Naive thymus-derived CD4-positive, alpha-beta T cell (primary cell): ENCODE measurements at regions of chr17 and their contacts with region 1.

Region 1: DNA sequence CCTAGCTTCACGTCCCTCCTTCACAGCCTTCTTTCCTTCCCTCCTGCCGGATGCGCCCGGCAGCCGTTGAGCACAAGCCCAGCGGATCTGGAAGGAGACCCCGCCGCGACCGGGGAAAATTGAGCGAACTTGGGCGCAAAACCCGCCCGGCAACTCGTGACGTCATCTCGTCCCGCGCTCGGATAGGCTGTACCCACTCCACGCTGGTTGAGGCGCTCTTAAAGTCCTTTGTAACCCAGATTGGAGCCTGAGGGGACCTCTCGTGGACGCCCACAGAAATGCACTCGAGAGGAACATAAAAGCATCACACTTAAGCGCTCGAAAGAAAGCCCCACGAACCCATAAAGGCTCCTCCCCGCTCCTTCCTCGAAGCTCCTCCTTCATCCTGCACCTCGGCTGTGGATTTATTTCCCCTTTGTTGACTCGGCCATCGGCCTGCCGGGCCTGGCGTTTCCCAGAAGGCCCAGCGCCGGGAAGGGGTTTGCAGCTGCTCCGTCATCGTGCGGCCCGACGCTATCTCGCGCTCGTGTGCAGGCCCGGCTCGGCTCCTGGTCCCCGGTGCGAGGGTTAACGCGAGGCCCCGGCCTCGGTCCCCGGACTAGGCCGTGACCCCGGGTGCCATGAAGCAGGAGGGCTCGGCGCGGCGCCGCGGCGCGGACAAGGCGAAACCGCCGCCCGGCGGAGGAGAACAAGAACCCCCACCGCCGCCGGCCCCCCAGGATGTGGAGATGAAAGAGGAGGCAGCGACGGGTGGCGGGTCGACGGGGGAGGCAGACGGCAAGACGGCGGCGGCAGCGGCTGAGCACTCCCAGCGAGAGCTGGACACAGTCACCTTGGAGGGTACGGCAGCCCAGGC is at the start of gene PSMD3:
- DNase-seq: peak; percentile 86 to 99 (median 98)
- ATAC-seq: peak; percentile 97
- H3K4me3 ChIP-seq: peak within 1 kb of the TSS; percentile 63
- H3K4me3 Mint-ChIP-seq: peak within 1 kb of the TSS; percentile 89 to 97 (median 94)
- H3K27ac ChIP-seq: peak within 1 kb of the TSS; percentile 91
- H3K27ac Mint-ChIP-seq: peak within 1 kb of the TSS; percentile 89 to 96 (median 93)
- H3K4me1 ChIP-seq: peaks cover 17 to 23% of the 10 kb centered on the region in 2 donors
- H3K4me1 Mint-ChIP-seq: peaks cover 24 to 50% (median 46%) of the 10 kb centered on the region in 7 donors
- H3K27me3 ChIP-seq: no peaks in the 10 kb centered on the region
- H3K27me3 Mint-ChIP-seq: peaks cover 0 to 13% (median 0%) of the 10 kb centered on the region in 5 donors
- total RNA-seq, gene PSMD3: 55.7 to 111 (median 68.9) TPM

Region 2: DNA sequence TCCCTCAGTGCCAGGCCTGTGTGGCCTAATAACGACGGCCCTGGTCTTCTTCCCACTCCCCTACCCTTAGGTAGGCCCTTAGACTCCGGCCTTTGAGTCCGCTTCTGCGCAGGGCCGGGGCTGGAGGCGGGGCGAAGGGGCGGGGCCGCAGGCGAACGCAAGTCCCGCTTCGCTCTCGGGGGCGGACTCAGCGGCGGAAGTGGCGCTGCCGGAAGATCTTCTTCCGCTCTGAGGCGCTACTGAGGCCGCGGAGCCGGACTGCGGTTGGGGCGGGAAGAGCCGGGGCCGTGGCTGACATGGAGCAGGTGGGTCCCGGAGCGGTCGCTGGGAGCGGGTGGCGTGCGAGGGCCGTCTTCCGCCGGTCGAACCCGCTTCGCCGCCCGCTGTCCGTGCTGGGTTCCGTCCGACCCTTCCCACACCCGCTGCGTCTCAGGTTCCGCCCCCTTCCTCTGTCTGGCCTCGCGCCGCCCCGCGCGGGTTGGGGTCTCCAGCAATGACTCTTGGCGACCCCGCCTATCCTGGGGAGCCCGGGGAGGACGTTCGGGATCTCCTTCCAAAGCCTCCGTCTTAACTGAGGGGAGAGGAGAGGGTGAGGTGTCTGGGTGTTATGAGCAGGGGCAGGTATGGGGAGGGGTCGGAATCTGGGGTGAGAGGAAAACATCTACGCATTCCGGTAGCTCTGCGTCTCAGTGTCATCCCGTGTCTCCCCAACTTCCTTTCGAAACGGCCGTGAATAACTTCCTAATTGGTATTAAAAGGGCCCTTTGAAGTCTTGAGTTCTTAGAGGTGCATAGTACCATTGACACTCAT is 343.4 kb before region 1 on chr17 and contains the start of gene STARD3:
- CTCF ChIA-PET with region 1: no interaction called
- POLR2A ChIA-PET with region 1: no interaction called
- intact Hi-C with region 1: loop called (anchors 1 to 5 kb)
- DNase-seq: peak; percentile 80 to 92 (median 86)
- ATAC-seq: peak; percentile 95
- H3K4me3 ChIP-seq: peak within 1 kb of the TSS; percentile 86
- H3K4me3 Mint-ChIP-seq: peak within 1 kb of the TSS; percentile 89 to 98 (median 95)
- H3K27ac ChIP-seq: peak within 1 kb of the TSS; percentile 92
- H3K27ac Mint-ChIP-seq: peak within 1 kb of the TSS; percentile 76 to 97 (median 92)
- H3K4me1 ChIP-seq: peaks cover 43 to 49% of the 10 kb centered on the region in 2 donors
- H3K4me1 Mint-ChIP-seq: peaks cover 40 to 71% (median 60%) of the 10 kb centered on the region in 7 donors
- H3K27me3 ChIP-seq: no peaks in the 10 kb centered on the region
- H3K27me3 Mint-ChIP-seq: peaks cover 0 to under 1% (median 0%) of the 10 kb centered on the region in 5 donors
- total RNA-seq, gene STARD3: 69.8 to 143 (median 99.3) TPM

Region 3: DNA sequence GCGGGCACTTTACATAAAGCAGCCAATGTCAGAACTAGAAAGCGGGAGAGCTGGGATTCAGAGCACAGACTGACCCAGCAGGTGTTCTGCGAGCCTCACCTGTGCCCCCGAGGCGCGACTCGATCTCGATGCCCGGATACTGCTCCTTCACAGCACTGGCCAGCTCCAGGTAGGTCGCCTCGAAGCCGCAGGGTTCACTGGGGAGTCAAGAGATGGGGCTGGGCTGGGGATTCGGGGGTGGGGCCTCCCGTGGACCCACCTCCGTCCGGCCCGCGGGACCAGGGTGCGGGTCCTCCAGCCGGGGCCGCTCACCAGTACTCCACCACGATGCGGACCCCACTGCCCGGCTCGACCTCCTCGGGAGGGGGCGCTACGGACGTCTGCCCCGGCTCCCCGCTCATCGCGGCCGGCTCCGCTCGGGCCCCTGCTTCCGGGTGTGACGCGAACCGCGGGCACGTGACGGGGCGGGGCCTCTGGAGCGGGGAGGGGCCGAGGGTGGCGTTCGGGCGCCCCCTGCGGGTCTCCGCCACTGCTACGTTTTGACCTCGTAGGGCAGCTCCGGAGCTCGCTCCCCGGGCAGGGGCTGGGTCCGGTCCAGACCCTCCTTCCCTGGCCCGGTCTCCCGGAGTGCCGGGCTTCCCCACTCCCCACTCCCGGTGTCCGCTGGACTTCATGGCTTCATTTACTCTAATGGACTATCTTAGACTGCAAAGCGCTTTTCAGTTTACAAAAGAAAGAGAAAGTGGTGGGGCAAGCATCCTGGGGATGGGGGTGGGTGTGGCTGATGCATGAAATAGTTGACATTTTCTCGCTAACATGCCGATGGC is 250.3 kb before region 1 on chr17 and contains the start of gene MIEN1:
- CTCF ChIA-PET with region 1: interaction called, 3 read pairs
- POLR2A ChIA-PET with region 1: interaction called, 3 read pairs
- intact Hi-C with region 1: loop called (anchors 1 kb)
- DNase-seq: peak; percentile 87 to 100 (median 95)
- ATAC-seq: peak; percentile 98
- H3K4me3 ChIP-seq: peak within 1 kb of the TSS; percentile 95
- H3K4me3 Mint-ChIP-seq: peak within 1 kb of the TSS; percentile 88 to 96 (median 92)
- H3K27ac ChIP-seq: peak within 1 kb of the TSS; percentile 95
- H3K27ac Mint-ChIP-seq: peak within 1 kb of the TSS; percentile 84 to 98 (median 94)
- H3K4me1 ChIP-seq: peaks cover 10% of the 10 kb centered on the region in 2 donors
- H3K4me1 Mint-ChIP-seq: peaks cover 11 to 20% (median 16%) of the 10 kb centered on the region in 7 donors
- H3K27me3 ChIP-seq: no peaks in the 10 kb centered on the region
- H3K27me3 Mint-ChIP-seq: peaks cover 0 to 7% (median 0%) of the 10 kb centered on the region in 5 donors
- total RNA-seq, gene MIEN1: 28.7 to 40.1 (median 32.3) TPM

Region 4: DNA sequence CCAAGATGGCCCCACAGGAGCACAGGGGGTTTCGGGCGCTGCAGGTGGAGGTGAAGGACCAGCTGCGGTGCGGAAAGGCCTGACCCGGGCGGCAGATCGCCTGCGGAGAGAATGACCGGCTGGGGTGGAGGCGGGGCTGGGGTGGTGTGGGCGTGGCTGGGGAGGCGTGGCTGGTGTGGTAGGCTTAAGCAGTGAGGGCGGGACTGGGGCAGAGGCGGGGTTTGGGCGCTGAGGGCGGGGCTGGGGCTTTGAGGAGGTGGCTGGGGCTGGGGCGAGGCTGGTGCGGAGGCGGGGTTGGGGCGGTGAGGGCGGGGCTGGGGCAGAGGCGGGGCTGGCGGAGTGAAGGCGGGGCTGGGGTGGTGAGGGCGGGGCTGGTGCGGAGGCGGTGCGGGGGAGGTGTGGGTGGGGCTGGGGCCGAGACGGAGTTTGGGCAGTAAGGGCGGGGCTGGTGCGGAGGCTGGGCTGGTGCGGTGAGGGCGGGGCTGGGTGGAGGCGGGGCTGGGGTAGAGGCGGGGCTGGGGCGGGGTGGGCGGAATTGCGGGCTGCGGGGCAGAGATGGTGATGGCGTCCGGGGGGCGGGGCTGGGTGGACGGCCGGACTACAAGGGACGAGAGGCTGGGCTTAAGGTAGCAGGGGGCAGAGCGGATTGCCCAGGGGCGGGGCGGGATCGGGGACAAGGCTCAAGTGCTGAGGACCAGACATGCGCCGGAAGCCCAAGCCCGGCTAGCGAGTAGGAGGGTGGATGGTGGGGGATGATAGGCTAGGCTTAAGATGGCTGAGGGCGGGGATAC is 27.7 kb before region 1 on chr17:
- CTCF ChIA-PET with region 1: interaction called, 41 read pairs
- POLR2A ChIA-PET with region 1: interaction called, 21 read pairs
- intact Hi-C with region 1: loop called (anchors 1 kb)
- DNase-seq: peak; percentile 81 to 98 (median 90)
- ATAC-seq: peak; percentile 94
- H3K4me3 ChIP-seq: peak overlapping the region; percentile 71
- H3K4me3 Mint-ChIP-seq: peak overlapping the region; percentile 68 to 93 (median 82)
- H3K27ac ChIP-seq: peak overlapping the region; percentile 74
- H3K27ac Mint-ChIP-seq: peak overlapping the region; percentile 28 to 87 (median 72)
- H3K4me1 ChIP-seq: peaks cover 5 to 18% of the 10 kb centered on the region in 2 donors
- H3K4me1 Mint-ChIP-seq: peaks cover 1 to 43% (median 27%) of the 10 kb centered on the region in 7 donors
- H3K27me3 ChIP-seq: no peaks in the 10 kb centered on the region
- H3K27me3 Mint-ChIP-seq: peaks cover 0 to 7% (median 0%) of the 10 kb centered on the region in 5 donors

Region 5: GRCh38 chr17:40139566-40140058 is 159.0 kb after region 1 on chr17:
- CTCF ChIA-PET with region 1: no interaction called
- POLR2A ChIA-PET with region 1: no interaction called
- intact Hi-C with region 1: loop called in 1 of 2 experiments (anchors 1 kb)
- DNase-seq: peak in 4 of 9 donors; percentile 8 to 25 (median 10)
- ATAC-seq: peak; percentile 8
- H3K4me3 ChIP-seq: peak overlapping the region; percentile 80
- H3K4me3 Mint-ChIP-seq: peak overlapping the region; percentile 83 to 97 (median 93)
- H3K27ac ChIP-seq: peak overlapping the region; percentile 96
- H3K27ac Mint-ChIP-seq: peak overlapping the region; percentile 85 to 100 (median 98)
- H3K4me1 ChIP-seq: peaks cover 21 to 28% of the 10 kb centered on the region in 2 donors
- H3K4me1 Mint-ChIP-seq: peaks cover 14 to 62% (median 44%) of the 10 kb centered on the region in 7 donors
- H3K27me3 ChIP-seq: no peaks in the 10 kb centered on the region
- H3K27me3 Mint-ChIP-seq: peaks cover 0 to 2% (median 0%) of the 10 kb centered on the region in 5 donors

Region 6: GRCh38 chr17:40181205-40181604 is 200.6 kb after region 1 on chr17:
- CTCF ChIA-PET with region 1: no interaction called
- POLR2A ChIA-PET with region 1: no interaction called
- intact Hi-C with region 1: no loop called
- DNase-seq: no peak
- ATAC-seq: no peak
- H3K4me3 ChIP-seq: no peak overlapping the region
- H3K4me3 Mint-ChIP-seq: no peak overlapping the region
- H3K27ac ChIP-seq: no peak overlapping the region
- H3K27ac Mint-ChIP-seq: no peak overlapping the region
- H3K4me1 ChIP-seq: peaks cover 5% of the 10 kb centered on the region in 2 donors
- H3K4me1 Mint-ChIP-seq: peaks cover 6 to 12% (median 9%) of the 10 kb centered on the region in 7 donors
- H3K27me3 ChIP-seq: no peaks in the 10 kb centered on the region
- H3K27me3 Mint-ChIP-seq: no peaks in the 10 kb centered on the region